ENCODE measurements at regions of chr3 and their contacts with region 1.

Region 1: DNA sequence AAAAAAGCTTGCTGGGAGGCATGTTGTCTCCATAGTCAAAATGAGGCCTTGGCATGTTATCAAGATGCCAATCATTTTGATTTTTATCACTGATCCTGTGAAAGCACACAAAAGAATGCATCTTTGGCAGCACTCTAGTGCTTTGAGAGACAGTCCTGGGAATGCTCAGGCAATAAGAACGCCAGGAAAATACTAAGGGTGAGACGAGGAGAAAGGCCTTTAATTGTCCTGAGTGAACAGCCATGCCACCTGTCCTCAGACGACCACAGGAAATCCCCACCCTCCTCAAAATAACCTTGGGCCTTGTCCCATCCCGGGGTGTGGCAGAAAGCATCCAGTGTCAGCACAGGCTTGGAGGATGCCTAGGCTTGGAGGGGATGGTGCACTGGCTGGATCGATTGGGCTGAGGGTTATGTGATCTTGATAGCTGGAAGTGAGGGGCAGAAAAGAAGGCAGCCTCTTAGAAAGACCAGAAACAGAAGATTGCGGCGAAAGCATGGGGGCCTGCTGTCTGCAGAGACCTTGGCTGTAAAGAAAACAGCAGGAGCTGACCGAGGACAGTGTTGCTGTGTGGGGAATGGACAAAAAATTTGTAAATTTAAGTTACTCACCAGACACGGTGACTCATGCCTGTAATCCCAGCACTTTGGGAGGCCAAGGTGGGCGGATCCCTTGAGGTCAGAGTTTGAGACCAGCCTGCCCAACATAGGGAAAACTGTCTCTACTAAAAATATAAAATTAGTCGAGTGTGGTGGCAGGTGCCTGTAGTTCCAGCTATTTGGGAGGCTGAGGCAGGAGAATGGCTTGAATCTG is 7.3 kb downstream of the TMEM158 start:
- DNase-seq: no peak
- ATAC-seq: no peak
- H3K4me3 ChIP-seq: no peak overlapping the region
- H3K27ac ChIP-seq: no peak overlapping the region
- H3K4me1 ChIP-seq: no peaks in the 10 kb centered on the region
- H3K27me3 ChIP-seq: peaks cover 0 to 52% (median 10%) of the 10 kb centered on the region in 9 donors
- CTCF ChIP-seq: no peak
- POLR2A ChIP-seq: no peak

Region 2: GRCh38 chr3:45486136-45486535 is 267.4 kb after region 1 on chr3:
- intact Hi-C with region 1: loop called in 5 of 10 experiments (anchors 5 to 10 kb)
- DNase-seq: no peak
- ATAC-seq: no peak
- H3K4me3 ChIP-seq: no peak overlapping the region
- H3K27ac ChIP-seq: no peak overlapping the region
- H3K4me1 ChIP-seq: no peaks in the 10 kb centered on the region
- H3K27me3 ChIP-seq: no peaks in the 10 kb centered on the region
- CTCF ChIP-seq: no peak
- POLR2A ChIP-seq: no peak

Region 3: DNA sequence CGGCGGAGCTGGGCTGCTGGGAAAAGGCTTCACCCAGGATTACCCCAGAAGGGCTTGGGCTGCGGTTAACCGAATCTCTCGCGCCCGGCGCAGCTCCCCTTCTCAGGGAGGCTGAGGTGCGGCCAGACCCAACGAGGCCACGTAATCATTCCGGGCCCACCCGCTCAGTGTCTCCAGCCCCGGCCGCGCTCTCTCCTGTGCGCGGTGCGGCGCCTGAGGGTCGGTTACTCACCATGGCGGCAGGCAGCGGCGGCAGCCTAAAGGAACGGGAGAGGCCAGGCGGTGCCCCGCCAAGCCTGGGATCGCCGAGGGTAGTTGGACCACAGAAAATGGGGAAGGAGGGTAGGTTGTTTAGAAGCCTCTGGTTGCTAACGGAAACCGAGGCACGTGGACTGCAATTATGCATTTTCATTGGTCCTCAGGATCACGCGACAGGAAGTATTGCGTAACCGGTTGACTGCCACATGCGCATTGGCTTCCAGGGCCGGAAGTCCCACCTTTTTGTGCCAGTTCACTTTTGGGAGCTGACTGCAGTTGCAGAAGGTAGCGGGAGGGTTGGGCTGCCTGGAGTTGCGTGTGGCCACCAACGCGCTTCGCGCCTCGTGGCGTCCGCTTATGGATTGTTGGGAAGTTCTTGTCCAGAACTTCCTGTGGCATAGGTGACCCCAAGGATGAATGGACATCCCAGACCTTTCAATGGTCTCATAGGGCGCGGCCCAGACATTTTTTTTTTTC is 623.1 kb after region 1 on chr3 and contains the start of gene LZTFL1:
- intact Hi-C with region 1: no loop called
- DNase-seq: peak; percentile 90 to 95 (median 93)
- ATAC-seq: peak; percentile 94 to 99 (median 98)
- H3K4me3 ChIP-seq: peak within 1 kb of the TSS; percentile 67 to 98 (median 86)
- H3K27ac ChIP-seq: peak within 1 kb of the TSS in 7 of 12 donors; percentile 17 to 53 (median 38)
- H3K4me1 ChIP-seq: peaks cover 0 to 16% (median 8%) of the 10 kb centered on the region in 12 donors
- H3K27me3 ChIP-seq: no peaks in the 10 kb centered on the region
- CTCF ChIP-seq: no peak
- POLR2A ChIP-seq: peak in 1 of 2 donors; percentile 44
- total RNA-seq, gene LZTFL1: 6.7 to 13.0 (median 8.8) TPM

Measured in heart left ventricle (tissue), 16 donors.